Activated CD4-positive, alpha-beta memory T cell treated with anti-CD3 and anti-CD28 coated beads for 36 hours (primary cell): ENCODE measurements at regions of chr7 and their contacts with region 1.

Region 1: GRCh38 chr7:30026229-30027064 is at the start of gene FKBP14:
- DNase-seq: peak; percentile 96
- H3K4me3 Mint-ChIP-seq: no peak within 1 kb of the TSS
- H3K27ac Mint-ChIP-seq: peak within 1 kb of the TSS; percentile 75
- H3K4me1 Mint-ChIP-seq: peaks cover 32% of the 10 kb centered on the region
- H3K27me3 Mint-ChIP-seq: no peaks in the 10 kb centered on the region
- total RNA-seq, gene FKBP14: 6.3 to 7.9 TPM

Region 2: GRCh38 chr7:29988424-29989256 is 37.8 kb before region 1 on chr7:
- CTCF ChIA-PET with region 1: no interaction called
- POLR2A ChIA-PET with region 1: interaction called, 4 read pairs
- intact Hi-C with region 1: loop called (anchors 2 kb)
- DNase-seq: peak; percentile 28
- H3K4me3 Mint-ChIP-seq: peak overlapping the region; percentile 65
- H3K27ac Mint-ChIP-seq: no peak overlapping the region
- H3K4me1 Mint-ChIP-seq: peaks cover 10% of the 10 kb centered on the region
- H3K27me3 Mint-ChIP-seq: peaks cover 45% of the 10 kb centered on the region

Region 3: GRCh38 chr7:30134611-30135545 is 108.4 kb after region 1 on chr7 and contains the start of gene MTURN:
- CTCF ChIA-PET with region 1: no interaction called
- POLR2A ChIA-PET with region 1: interaction called, 3 read pairs
- intact Hi-C with region 1: loop called (anchors 2 kb)
- DNase-seq: peak; percentile 88
- H3K4me3 Mint-ChIP-seq: peak within 1 kb of the TSS; percentile 86
- H3K27ac Mint-ChIP-seq: peak within 1 kb of the TSS; percentile 45
- H3K4me1 Mint-ChIP-seq: peaks cover 5% of the 10 kb centered on the region
- H3K27me3 Mint-ChIP-seq: no peaks in the 10 kb centered on the region
- total RNA-seq, gene MTURN: 3.1 to 3.7 TPM

Region 4: GRCh38 chr7:30478349-30479201 is 452.1 kb after region 1 on chr7 and contains the start of gene NOD1:
- CTCF ChIA-PET with region 1: no interaction called
- POLR2A ChIA-PET with region 1: no interaction called
- intact Hi-C with region 1: loop called (anchors 1 kb)
- DNase-seq: peak; percentile 77
- H3K4me3 Mint-ChIP-seq: peak within 1 kb of the TSS; percentile 91
- H3K27ac Mint-ChIP-seq: peak within 1 kb of the TSS; percentile 85
- H3K4me1 Mint-ChIP-seq: peaks cover 51% of the 10 kb centered on the region
- H3K27me3 Mint-ChIP-seq: no peaks in the 10 kb centered on the region
- total RNA-seq, gene NOD1: 12.8 to 14.0 TPM

Region 5: GRCh38 chr7:30594549-30595435 is 568.3 kb after region 1 on chr7 and contains the start of gene GARS1:
- CTCF ChIA-PET with region 1: no interaction called
- POLR2A ChIA-PET with region 1: no interaction called
- intact Hi-C with region 1: loop called (anchors 5 kb)
- DNase-seq: peak; percentile 92
- H3K4me3 Mint-ChIP-seq: peak within 1 kb of the TSS; percentile 99
- H3K27ac Mint-ChIP-seq: peak within 1 kb of the TSS; percentile 95
- H3K4me1 Mint-ChIP-seq: peaks cover 53% of the 10 kb centered on the region
- H3K27me3 Mint-ChIP-seq: no peaks in the 10 kb centered on the region
- total RNA-seq, gene GARS1: 345 to 368 TPM

Region 6: GRCh38 chr7:31437250-31437865 is 1410.9 kb after region 1 on chr7:
- CTCF ChIA-PET with region 1: no interaction called
- POLR2A ChIA-PET with region 1: no interaction called
- intact Hi-C with region 1: no loop called
- DNase-seq: no peak
- H3K4me3 Mint-ChIP-seq: no peak overlapping the region
- H3K27ac Mint-ChIP-seq: no peak overlapping the region
- H3K4me1 Mint-ChIP-seq: no peaks in the 10 kb centered on the region
- H3K27me3 Mint-ChIP-seq: no peaks in the 10 kb centered on the region